Head of caudate nucleus (tissue), 42 donors: ENCODE measurements at regions of chr6 and their contacts with region 1.

Region 1: GRCh38 chr6:73653571-73654424 is at the start of gene SLC17A5:
- DNase-seq: peak; percentile 86 to 98 (median 94)

Region 2: GRCh38 chr6:73491377-73491776 is 162.4 kb before region 1 on chr6:
- intact Hi-C with region 1: no loop called
- DNase-seq: no peak

Region 3: GRCh38 chr6:75284632-75285286 is 1631.0 kb after region 1 on chr6 and contains the start of gene TMEM30A:
- intact Hi-C with region 1: loop called (anchors 5 kb)
- DNase-seq: peak; percentile 94 to 99 (median 98)